PC-9 (cell line): ENCODE measurements at regions of chr1 and their contacts with region 1.

Region 1: DNA sequence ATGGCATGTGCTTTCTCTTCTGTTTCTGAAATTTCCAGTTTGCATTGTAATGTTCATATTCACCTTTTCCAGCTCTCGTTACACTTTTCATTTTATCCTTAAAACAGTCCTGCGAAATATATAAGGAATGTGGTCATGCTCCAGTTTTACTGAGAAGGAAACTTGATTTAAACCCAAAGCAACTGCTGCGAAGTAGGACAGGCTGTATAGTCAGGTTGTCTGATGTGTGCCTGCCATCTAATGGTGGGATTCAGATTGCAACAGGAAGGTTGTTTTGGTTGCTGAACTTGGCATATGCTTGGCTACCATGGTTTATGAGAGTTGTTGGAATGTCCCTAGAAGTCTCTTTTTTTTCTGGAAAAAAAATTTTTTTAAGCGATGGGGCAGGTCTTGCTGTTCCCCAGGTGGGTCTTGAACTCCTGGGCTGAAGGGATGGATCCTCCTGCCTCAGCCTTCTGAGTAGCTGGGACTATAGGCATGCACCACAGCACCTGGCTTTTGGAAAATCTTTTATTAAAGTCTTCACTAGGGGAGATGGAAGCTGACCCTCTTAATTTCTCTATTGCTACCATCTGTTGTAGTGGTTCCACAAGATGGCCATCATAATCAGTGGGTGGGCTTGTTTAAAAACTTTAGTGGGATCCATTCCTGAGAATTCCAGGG is 86.9 kb downstream of the UCK2 start:
- DNase-seq: peak; percentile 52 to 54
- H3K4me3 ChIP-seq: no peak overlapping the region
- H3K27ac ChIP-seq: no peak overlapping the region
- H3K4me1 ChIP-seq: no peaks in the 10 kb centered on the region
- H3K27me3 ChIP-seq: no peaks in the 10 kb centered on the region
- CTCF ChIP-seq: peak; percentile 89

Region 2: GRCh38 chr1:165392634-165393571 is 521.4 kb before region 1 on chr1:
- CTCF ChIA-PET with region 1: no interaction called
- POLR2A ChIA-PET with region 1: no interaction called
- intact Hi-C with region 1: loop called (anchors 2 kb)
- DNase-seq: peak; percentile 58 to 64
- H3K4me3 ChIP-seq: no peak overlapping the region
- H3K27ac ChIP-seq: no peak overlapping the region
- H3K4me1 ChIP-seq: no peaks in the 10 kb centered on the region
- H3K27me3 ChIP-seq: peaks cover 19% of the 10 kb centered on the region; the same call in 1 of the 2 replicates
- CTCF ChIP-seq: peak; percentile 97

Region 3: GRCh38 chr1:165592945-165593823 is 321.1 kb before region 1 on chr1:
- CTCF ChIA-PET with region 1: no interaction called
- POLR2A ChIA-PET with region 1: no interaction called
- intact Hi-C with region 1: no loop called
- DNase-seq: peak; percentile 61 to 65
- H3K4me3 ChIP-seq: no peak overlapping the region
- H3K27ac ChIP-seq: no peak overlapping the region
- H3K4me1 ChIP-seq: peaks cover 5% of the 10 kb centered on the region
- H3K27me3 ChIP-seq: peaks cover 13% of the 10 kb centered on the region
- CTCF ChIP-seq: peak; percentile 94

Region 4: GRCh38 chr1:165717918-165718515 is 196.2 kb before region 1 on chr1:
- CTCF ChIA-PET with region 1: no interaction called
- POLR2A ChIA-PET with region 1: no interaction called
- intact Hi-C with region 1: loop called (anchors 1 kb)
- DNase-seq: peak; percentile 38 to 41
- H3K4me3 ChIP-seq: no peak overlapping the region
- H3K27ac ChIP-seq: no peak overlapping the region
- H3K4me1 ChIP-seq: no peaks in the 10 kb centered on the region
- H3K27me3 ChIP-seq: no peaks in the 10 kb centered on the region
- CTCF ChIP-seq: peak; percentile 81

Region 5: GRCh38 chr1:165815725-165816124 is 98.5 kb before region 1 on chr1:
- CTCF ChIA-PET with region 1: interaction called, 11 read pairs
- POLR2A ChIA-PET with region 1: no interaction called
- intact Hi-C with region 1: no loop called
- DNase-seq: peak in 1 of 2 experiments; percentile 41
- H3K4me3 ChIP-seq: no peak overlapping the region
- H3K27ac ChIP-seq: no peak overlapping the region
- H3K4me1 ChIP-seq: no peaks in the 10 kb centered on the region
- H3K27me3 ChIP-seq: no peaks in the 10 kb centered on the region
- CTCF ChIP-seq: no peak

Region 6: GRCh38 chr1:165827268-165828102 is 86.8 kb before region 1 on chr1 and contains the start of gene UCK2:
- CTCF ChIA-PET with region 1: no interaction called
- POLR2A ChIA-PET with region 1: no interaction called
- intact Hi-C with region 1: loop called (anchors 5 kb)
- DNase-seq: peak; percentile 72 to 80
- H3K4me3 ChIP-seq: peak within 1 kb of the TSS; percentile 62
- H3K27ac ChIP-seq: peak within 1 kb of the TSS; percentile 79
- H3K4me1 ChIP-seq: peaks cover 17% of the 10 kb centered on the region
- H3K27me3 ChIP-seq: no peaks in the 10 kb centered on the region
- CTCF ChIP-seq: no peak; the same call in 1 of the 2 replicates
- total RNA-seq, gene UCK2: 54.8 and 59.9 TPM in 2 replicates